CD4-positive, alpha-beta memory T cell (primary cell): ENCODE measurements at regions of chr16 and their contacts with region 1.

Region 1: DNA sequence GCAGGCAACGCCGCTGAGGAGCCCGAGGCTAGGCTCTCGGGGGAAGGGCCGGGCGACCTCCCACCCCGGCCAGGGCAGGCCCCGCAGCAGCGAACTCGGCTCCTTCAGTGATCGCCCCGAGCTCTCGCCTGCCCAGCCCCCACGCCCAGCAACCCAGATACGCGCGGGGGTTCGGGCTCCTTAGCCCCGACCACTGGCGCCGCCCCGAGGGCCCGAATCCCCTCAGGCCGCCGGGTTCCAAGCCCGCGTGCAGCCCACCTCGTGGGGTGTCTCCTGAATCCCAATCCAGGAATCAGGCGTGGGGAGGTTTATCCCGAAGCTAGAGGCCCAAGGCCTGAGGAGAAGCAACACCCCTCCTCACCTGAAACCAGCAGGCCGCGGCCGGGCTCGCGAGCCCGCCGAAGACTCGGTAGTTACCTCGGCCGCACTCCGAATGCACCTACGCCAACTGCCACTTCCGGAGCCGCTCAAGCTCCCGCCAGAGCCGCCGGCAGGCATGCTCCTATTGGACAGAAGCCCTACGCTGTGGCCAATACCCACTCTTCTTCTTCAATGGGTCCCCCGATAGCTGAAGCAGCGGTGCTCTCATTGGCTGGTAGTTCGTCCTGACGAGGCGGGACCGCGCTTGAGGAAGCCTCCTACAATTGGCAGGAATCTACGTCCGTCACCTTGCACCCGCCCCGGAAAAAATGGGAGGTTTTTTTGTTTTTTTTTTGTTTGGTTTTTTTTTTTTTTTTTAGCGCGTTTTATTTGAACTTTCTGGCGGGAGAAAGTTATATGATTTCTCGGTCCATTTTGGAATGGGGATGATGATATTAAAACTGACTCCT is at the start of gene RFWD3:
- DNase-seq: peak; percentile 95 to 99 (median 98)
- H3K4me3 ChIP-seq: peak within 1 kb of the TSS; percentile 73 to 96
- H3K4me3 Mint-ChIP-seq: peak within 1 kb of the TSS; percentile 91 to 100 (median 96)
- H3K27ac ChIP-seq: peak within 1 kb of the TSS; percentile 89
- H3K27ac Mint-ChIP-seq: peak within 1 kb of the TSS; percentile 91 to 98 (median 96)
- H3K4me1 ChIP-seq: peaks cover 33% of the 10 kb centered on the region
- H3K4me1 Mint-ChIP-seq: peaks cover 20 to 52% (median 38%) of the 10 kb centered on the region in 4 donors
- H3K27me3 ChIP-seq: no peaks in the 10 kb centered on the region
- H3K27me3 Mint-ChIP-seq: no peaks in the 10 kb centered on the region
- total RNA-seq, gene RFWD3: 59.2 to 64.7 TPM

Region 2: GRCh38 chr16:74372953-74373846 is 293.4 kb before region 1 on chr16:
- CTCF ChIA-PET with region 1: no interaction called
- POLR2A ChIA-PET with region 1: interaction called, 3 read pairs
- intact Hi-C with region 1: loop called (anchors 2 kb)
- DNase-seq: no peak
- H3K4me3 ChIP-seq: no peak overlapping the region
- H3K4me3 Mint-ChIP-seq: no peak overlapping the region
- H3K27ac ChIP-seq: no peak overlapping the region
- H3K27ac Mint-ChIP-seq: peak overlapping the region in 4 of 7 donors; percentile 5 to 52 (median 31)
- H3K4me1 ChIP-seq: no peaks in the 10 kb centered on the region
- H3K4me1 Mint-ChIP-seq: peaks cover 0 to 4% (median 2%) of the 10 kb centered on the region in 4 donors
- H3K27me3 ChIP-seq: no peaks in the 10 kb centered on the region
- H3K27me3 Mint-ChIP-seq: no peaks in the 10 kb centered on the region

Region 3: DNA sequence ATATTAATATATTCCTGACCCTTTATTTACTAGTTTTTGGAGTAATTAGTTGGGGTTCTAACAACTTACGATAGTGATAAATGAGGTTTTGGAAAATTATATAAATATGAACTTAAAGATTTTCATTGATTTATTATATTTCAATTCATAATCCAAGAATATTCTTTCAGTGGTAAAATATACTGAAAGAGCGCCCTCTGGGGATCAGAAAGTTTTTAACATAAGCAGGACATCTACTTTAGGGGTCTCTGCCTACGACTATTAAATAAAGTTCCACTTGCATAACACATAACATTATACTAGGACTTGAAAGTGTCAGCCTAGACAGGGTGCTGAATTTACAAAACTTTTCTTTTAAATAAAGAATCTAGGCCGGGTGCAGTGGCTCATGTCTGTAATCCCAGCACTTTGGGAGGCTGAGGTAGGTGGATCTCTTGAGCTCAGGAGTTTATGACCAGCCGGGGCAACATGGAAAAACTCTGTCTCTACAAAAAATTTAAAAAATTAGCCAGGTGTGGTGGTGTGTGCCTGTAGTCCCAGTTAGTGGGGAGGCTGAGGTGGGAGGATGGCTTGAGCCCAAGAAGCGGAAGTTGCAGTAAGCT is 15.6 kb before region 1 on chr16:
- CTCF ChIA-PET with region 1: interaction called, 15 read pairs
- POLR2A ChIA-PET with region 1: interaction called, 23 read pairs
- intact Hi-C with region 1: no loop called
- DNase-seq: peak in 2 of 5 donors; percentile 4 to 8
- H3K4me3 ChIP-seq: no peak overlapping the region
- H3K4me3 Mint-ChIP-seq: no peak overlapping the region
- H3K27ac ChIP-seq: no peak overlapping the region
- H3K27ac Mint-ChIP-seq: peak overlapping the region in 1 of 7 donors; percentile 65
- H3K4me1 ChIP-seq: peaks cover 18% of the 10 kb centered on the region
- H3K4me1 Mint-ChIP-seq: peaks cover 24 to 37% (median 30%) of the 10 kb centered on the region in 4 donors
- H3K27me3 ChIP-seq: no peaks in the 10 kb centered on the region
- H3K27me3 Mint-ChIP-seq: no peaks in the 10 kb centered on the region

Region 4: DNA sequence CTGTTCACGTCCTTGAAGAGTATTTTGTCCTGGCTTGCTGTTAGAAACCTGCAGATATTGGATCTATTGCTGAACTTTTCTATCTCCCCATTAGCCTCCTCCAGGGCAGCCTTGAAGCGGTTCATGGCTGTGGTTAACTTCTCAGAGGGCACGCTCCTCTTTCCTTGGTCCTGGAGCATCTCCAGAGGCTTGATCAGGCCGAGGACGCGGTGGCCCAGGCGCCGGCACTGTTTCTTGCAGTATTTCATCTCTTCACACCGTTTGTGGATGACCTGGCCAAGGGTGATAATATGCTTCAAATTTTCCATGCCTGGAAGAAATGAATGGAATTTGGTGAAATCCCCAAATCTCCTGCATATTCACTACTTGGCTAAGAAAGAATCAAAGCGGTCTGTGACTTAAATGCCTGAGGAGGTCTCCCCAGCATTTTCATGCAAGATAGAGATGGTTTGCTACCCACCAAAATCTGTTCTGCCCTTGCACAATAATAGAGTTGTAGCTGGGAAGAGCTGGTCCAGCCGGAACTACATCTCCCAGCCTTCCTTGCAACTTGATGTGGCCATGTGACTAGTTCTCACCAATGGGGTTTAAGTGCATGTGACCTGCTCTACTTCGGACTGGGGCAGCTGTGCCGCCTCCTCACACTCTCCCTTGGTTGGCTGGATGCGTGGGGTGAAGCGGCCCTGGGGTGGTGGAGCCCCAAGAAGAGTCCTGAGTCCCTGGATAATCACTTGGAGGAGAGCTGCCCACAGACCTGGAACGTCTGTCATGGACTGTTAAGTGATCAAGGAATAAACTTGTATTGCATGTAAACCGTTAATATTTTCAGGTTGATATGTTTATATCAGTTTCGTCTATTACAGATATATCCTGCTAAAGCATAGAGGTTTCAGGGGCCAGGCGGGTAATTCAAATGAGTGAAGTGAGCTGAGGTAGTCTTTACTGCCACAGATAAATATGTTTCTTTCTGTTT is 29.1 kb after region 1 on chr16:
- CTCF ChIA-PET with region 1: interaction called, 12 read pairs
- POLR2A ChIA-PET with region 1: interaction called, 54 read pairs
- intact Hi-C with region 1: no loop called
- DNase-seq: peak; percentile 63 to 72 (median 67)
- H3K4me3 ChIP-seq: peak overlapping the region; percentile 24 to 46
- H3K4me3 Mint-ChIP-seq: peak overlapping the region; percentile 79 to 88 (median 86)
- H3K27ac ChIP-seq: peak overlapping the region; percentile 0
- H3K27ac Mint-ChIP-seq: peak overlapping the region; percentile 53 to 90 (median 84)
- H3K4me1 ChIP-seq: peaks cover 34% of the 10 kb centered on the region
- H3K4me1 Mint-ChIP-seq: peaks cover 31 to 66% (median 48%) of the 10 kb centered on the region in 4 donors
- H3K27me3 ChIP-seq: no peaks in the 10 kb centered on the region
- H3K27me3 Mint-ChIP-seq: no peaks in the 10 kb centered on the region

Region 5: GRCh38 chr16:74825941-74826542 is 159.4 kb after region 1 on chr16:
- CTCF ChIA-PET with region 1: no interaction called
- POLR2A ChIA-PET with region 1: no interaction called
- intact Hi-C with region 1: no loop called
- DNase-seq: no peak
- H3K4me3 ChIP-seq: no peak overlapping the region
- H3K4me3 Mint-ChIP-seq: no peak overlapping the region
- H3K27ac ChIP-seq: no peak overlapping the region
- H3K27ac Mint-ChIP-seq: no peak overlapping the region
- H3K4me1 ChIP-seq: no peaks in the 10 kb centered on the region
- H3K4me1 Mint-ChIP-seq: no peaks in the 10 kb centered on the region
- H3K27me3 ChIP-seq: no peaks in the 10 kb centered on the region
- H3K27me3 Mint-ChIP-seq: peaks cover 9 to 30% of the 10 kb centered on the region in 2 donors